Activated CD8-positive, alpha-beta T cell treated with anti-CD3 and anti-CD28 coated beads, Interleukin-2, amount 10 ng/mL, durations not matched to agents 7 days and 5 days (primary cell): ENCODE measurements at regions of chr15 and their contacts with region 1.

Region 1: GRCh38 chr15:40044717-40045571 is 6.0 kb upstream of the SRP14 start:
- DNase-seq: peak; percentile 88
- ATAC-seq: peak; percentile 92
- H3K4me3 Mint-ChIP-seq: peak overlapping the region; percentile 9
- H3K27ac Mint-ChIP-seq: peak overlapping the region; percentile 53
- H3K4me1 Mint-ChIP-seq: peaks cover 76% of the 10 kb centered on the region
- H3K27me3 Mint-ChIP-seq: no peaks in the 10 kb centered on the region

Region 2: GRCh38 chr15:40160689-40161688 is 116.0 kb after region 1 on chr15 and contains the start of gene BUB1B:
- CTCF ChIA-PET with region 1: interaction called, 85 read pairs
- POLR2A ChIA-PET with region 1: interaction called, 15 read pairs
- DNase-seq: peak; percentile 97
- ATAC-seq: peak; percentile 95
- H3K4me3 Mint-ChIP-seq: no peak within 1 kb of the TSS
- H3K27ac Mint-ChIP-seq: no peak within 1 kb of the TSS
- H3K4me1 Mint-ChIP-seq: peaks cover 10% of the 10 kb centered on the region
- H3K27me3 Mint-ChIP-seq: no peaks in the 10 kb centered on the region
- total RNA-seq, gene BUB1B: 91.9 to 94.9 TPM

Region 3: DNA sequence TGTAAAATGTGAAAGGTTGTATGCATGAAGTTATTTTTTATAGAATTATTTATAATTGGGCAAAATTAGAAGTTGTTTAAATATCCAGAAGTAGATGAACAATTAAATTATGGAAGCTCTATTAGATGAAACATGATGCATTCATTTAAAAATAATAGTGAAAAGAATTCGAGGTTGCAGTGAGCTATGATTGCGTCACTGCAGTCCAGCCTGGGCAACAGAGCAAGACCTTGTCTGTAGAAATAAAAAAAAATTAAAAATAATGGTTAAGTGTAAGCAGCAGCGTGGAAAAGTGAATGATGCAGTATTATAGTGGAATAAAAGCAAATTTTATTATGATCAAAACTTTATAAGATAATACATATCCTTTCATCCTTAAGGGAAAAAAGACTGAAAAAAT is 130.2 kb after region 1 on chr15:
- CTCF ChIA-PET with region 1: interaction called, 11 read pairs
- POLR2A ChIA-PET with region 1: no interaction called
- DNase-seq: no peak
- ATAC-seq: no peak
- H3K4me3 Mint-ChIP-seq: no peak overlapping the region
- H3K27ac Mint-ChIP-seq: no peak overlapping the region
- H3K4me1 Mint-ChIP-seq: peaks cover 6% of the 10 kb centered on the region
- H3K27me3 Mint-ChIP-seq: no peaks in the 10 kb centered on the region